GM12878 (cell line): ENCODE measurements at regions of chr1 and their contacts with region 1.

Region 1: GRCh38 chr1:207885129-207886032 is 25.5 kb downstream of the CD34 start:
- DNase-seq: no peak
- ATAC-seq: peak; percentile 91
- H3K4me3 ChIP-seq: no peak overlapping the region
- H3K27ac ChIP-seq: no peak overlapping the region
- H3K4me1 ChIP-seq: peaks cover 12% of the 10 kb centered on the region
- H3K27me3 ChIP-seq: no peaks in the 10 kb centered on the region
- CTCF ChIP-seq: peak; percentile 87 to 95 (median 95)
- EP300 ChIP-seq: no peak
- POLR2A ChIP-seq: no peak
- RAD21 ChIP-seq: peak; percentile 78

Region 2: GRCh38 chr1:207811920-207812720 is 73.3 kb before region 1 on chr1:
- CTCF ChIA-PET with region 1: interaction called, 12 read pairs
- POLR2A ChIA-PET with region 1: no interaction called
- RAD21 ChIA-PET with region 1: interaction called, 3 read pairs
- SMC1A ChIA-PET with region 1: interaction called, 5 read pairs
- in situ Hi-C with region 1: no loop called
- intact Hi-C with region 1: no loop called
- DNase-seq: no peak
- ATAC-seq: peak; percentile 53
- H3K4me3 ChIP-seq: no peak overlapping the region
- H3K27ac ChIP-seq: no peak overlapping the region
- H3K4me1 ChIP-seq: peaks cover 26% of the 10 kb centered on the region
- H3K27me3 ChIP-seq: no peaks in the 10 kb centered on the region
- CTCF ChIP-seq: peak; percentile 50 to 60 (median 56)
- EP300 ChIP-seq: no peak
- POLR2A ChIP-seq: peak; percentile 37; the same call in 1 of the 2 replicates
- RAD21 ChIP-seq: peak; percentile 55

Region 3: DNA sequence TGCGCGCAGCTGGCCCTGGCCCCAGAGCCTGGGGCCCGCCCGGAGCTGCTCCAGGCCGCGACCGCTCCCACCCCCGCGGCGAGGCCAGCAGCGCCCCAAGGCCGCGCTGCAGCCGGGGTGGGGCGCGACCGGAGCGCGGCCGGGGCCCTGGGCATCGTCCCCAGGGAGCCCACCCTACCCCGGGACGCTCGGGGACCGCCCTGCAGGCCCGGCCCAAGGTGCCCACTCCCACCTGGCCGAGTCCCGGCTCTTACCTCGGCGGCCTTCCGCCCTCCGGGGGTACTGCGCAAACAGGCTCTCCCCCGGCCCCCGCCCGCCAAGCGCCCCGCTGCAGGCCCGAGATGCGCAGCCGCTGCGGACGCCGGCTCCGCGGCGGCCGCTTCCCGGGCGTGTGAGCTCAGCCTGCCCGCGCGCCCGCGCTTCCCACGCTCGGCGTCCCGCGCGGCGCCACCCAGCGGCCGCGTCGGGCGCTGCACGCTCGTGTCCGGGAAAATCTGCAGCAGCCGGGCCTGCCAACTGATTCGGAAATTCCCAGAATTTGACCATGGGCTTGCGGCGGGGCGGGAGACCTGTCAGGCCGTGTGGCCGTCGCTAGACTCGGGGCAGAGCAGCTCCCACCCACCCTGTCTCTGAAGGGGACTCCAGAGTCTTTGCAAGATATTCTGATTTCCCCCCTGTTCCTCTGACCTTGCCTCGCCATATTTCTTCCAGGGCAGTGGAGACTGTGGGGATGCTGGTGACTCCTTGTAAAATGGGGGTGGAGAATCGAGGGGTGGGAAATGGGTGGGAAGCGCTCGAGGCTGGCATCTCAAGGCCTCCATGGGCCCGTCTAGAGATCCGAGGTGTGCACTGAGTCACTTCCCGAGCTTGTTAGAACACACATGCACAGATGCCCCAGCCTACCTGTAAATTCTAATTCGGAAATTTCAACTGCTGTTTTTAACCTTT is 16.3 kb before region 1 on chr1:
- CTCF ChIA-PET with region 1: interaction called, 244 read pairs
- POLR2A ChIA-PET with region 1: interaction called, 17 read pairs
- RAD21 ChIA-PET with region 1: interaction called, 70 read pairs
- SMC1A ChIA-PET with region 1: interaction called, 140 read pairs
- in situ Hi-C with region 1: no loop called
- intact Hi-C with region 1: no loop called
- DNase-seq: no peak
- ATAC-seq: peak; percentile 82
- H3K4me3 ChIP-seq: peak overlapping the region; percentile 97
- H3K27ac ChIP-seq: peak overlapping the region; percentile 77
- H3K4me1 ChIP-seq: peaks cover 55% of the 10 kb centered on the region
- H3K27me3 ChIP-seq: no peaks in the 10 kb centered on the region
- CTCF ChIP-seq: peak; percentile 70 to 83 (median 81)
- EP300 ChIP-seq: no peak; a peak in 1 of 4 replicates
- POLR2A ChIP-seq: peak; percentile 64; the same call in 1 of the 2 replicates
- RAD21 ChIP-seq: peak; percentile 62

Region 4: DNA sequence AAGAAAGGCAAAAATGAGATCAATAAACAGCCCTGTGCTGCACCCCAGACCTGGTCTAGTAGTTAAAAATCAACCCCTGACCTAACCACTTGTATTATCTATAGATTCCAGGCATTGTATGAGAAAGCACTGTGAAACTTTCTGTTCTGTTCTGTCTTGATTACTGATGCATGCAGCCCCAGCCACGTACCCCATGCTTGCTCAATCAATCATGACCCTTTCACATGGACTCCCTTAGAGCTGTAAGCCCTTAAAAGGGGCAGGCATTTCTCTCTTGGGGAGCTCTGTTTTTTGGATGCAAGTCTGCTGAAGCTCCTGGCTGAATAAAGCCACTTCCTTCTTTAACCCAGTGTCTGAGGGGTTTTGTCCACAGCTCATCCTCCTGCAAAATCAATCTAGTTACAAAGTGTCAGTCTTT is 49.8 kb after region 1 on chr1:
- CTCF ChIA-PET with region 1: interaction called, 19 read pairs
- POLR2A ChIA-PET with region 1: interaction called, 4 read pairs
- RAD21 ChIA-PET with region 1: interaction called, 8 read pairs
- SMC1A ChIA-PET with region 1: interaction called, 7 read pairs
- in situ Hi-C with region 1: no loop called
- intact Hi-C with region 1: no loop called
- DNase-seq: peak; percentile 87
- ATAC-seq: peak; percentile 99
- H3K4me3 ChIP-seq: no peak overlapping the region
- H3K27ac ChIP-seq: no peak overlapping the region
- H3K4me1 ChIP-seq: peaks cover 5% of the 10 kb centered on the region; the same call in 1 of the 2 replicates
- H3K27me3 ChIP-seq: no peaks in the 10 kb centered on the region; a peak in 1 of 4 replicates
- CTCF ChIP-seq: no peak
- EP300 ChIP-seq: peak; percentile 53 to 63; a peak in 1 of 4 replicates
- POLR2A ChIP-seq: no peak
- RAD21 ChIP-seq: no peak

Region 5: GRCh38 chr1:207952617-207953542 is 67.5 kb after region 1 on chr1:
- CTCF ChIA-PET with region 1: interaction called, 33 read pairs
- POLR2A ChIA-PET with region 1: no interaction called
- RAD21 ChIA-PET with region 1: interaction called, 5 read pairs
- SMC1A ChIA-PET with region 1: interaction called, 20 read pairs
- in situ Hi-C with region 1: no loop called
- intact Hi-C with region 1: no loop called
- DNase-seq: no peak
- ATAC-seq: peak; percentile 53
- H3K4me3 ChIP-seq: no peak overlapping the region
- H3K27ac ChIP-seq: no peak overlapping the region
- H3K4me1 ChIP-seq: no peaks in the 10 kb centered on the region
- H3K27me3 ChIP-seq: peaks cover 5 to 9% of the 10 kb centered on the region in 2 experiments
- CTCF ChIP-seq: no peak
- EP300 ChIP-seq: no peak
- POLR2A ChIP-seq: no peak
- RAD21 ChIP-seq: no peak

Region 6: GRCh38 chr1:207973898-207974568 is 88.7 kb after region 1 on chr1:
- CTCF ChIA-PET with region 1: interaction called, 52 read pairs
- POLR2A ChIA-PET with region 1: no interaction called
- RAD21 ChIA-PET with region 1: interaction called, 15 read pairs
- SMC1A ChIA-PET with region 1: interaction called, 9 read pairs
- in situ Hi-C with region 1: no loop called
- intact Hi-C with region 1: no loop called
- DNase-seq: no peak
- ATAC-seq: peak; percentile 65
- H3K4me3 ChIP-seq: no peak overlapping the region
- H3K27ac ChIP-seq: no peak overlapping the region
- H3K4me1 ChIP-seq: no peaks in the 10 kb centered on the region
- H3K27me3 ChIP-seq: peaks cover 0 to 4% of the 10 kb centered on the region in 2 experiments; a peak in 3 of 4 replicates
- CTCF ChIP-seq: no peak
- EP300 ChIP-seq: 0 out of 4 replicates have a peak, but pooled peaks of 1 of the 2 experiments have one; percentile 18
- POLR2A ChIP-seq: no peak
- RAD21 ChIP-seq: no peak

Region 7: DNA sequence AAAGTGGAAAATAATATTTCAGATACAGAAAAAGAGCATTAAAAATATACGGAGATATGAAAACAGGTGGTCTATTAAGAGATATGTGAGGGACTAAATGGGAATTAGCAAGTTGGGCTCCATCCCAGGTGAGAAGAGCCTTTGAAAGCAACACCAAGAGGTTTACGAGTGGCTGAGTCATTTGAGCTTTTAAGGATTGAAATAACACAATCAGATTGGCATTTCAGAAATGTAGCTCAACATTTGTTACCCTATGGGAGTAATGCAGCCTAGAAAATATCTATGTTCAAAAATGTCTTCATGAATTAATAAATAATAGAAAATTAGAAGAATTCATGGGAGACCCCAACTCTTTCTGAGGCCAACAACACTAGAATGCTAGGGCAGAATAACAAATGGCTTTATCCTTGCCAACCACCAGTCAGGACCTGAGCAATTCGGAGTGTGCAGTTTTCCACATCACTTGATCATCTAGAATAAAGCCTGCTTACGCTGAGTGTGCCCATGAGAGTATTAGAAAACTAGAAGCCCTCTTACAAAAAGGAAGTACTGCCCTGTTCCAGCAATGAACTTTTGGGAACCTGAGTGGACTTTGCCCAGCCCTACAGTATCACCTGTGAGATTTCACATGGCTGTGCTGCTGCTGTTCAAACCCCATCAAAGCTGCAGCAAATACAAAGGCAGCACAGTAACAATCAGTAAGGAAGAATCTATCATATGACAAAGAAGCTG is 1160.1 kb after region 1 on chr1:
- CTCF ChIA-PET with region 1: no interaction called
- POLR2A ChIA-PET with region 1: interaction called, 10 read pairs
- RAD21 ChIA-PET with region 1: no interaction called
- SMC1A ChIA-PET with region 1: no interaction called
- in situ Hi-C with region 1: no loop called
- intact Hi-C with region 1: no loop called
- DNase-seq: no peak
- ATAC-seq: no peak
- H3K4me3 ChIP-seq: no peak overlapping the region
- H3K27ac ChIP-seq: no peak overlapping the region
- H3K4me1 ChIP-seq: no peaks in the 10 kb centered on the region
- H3K27me3 ChIP-seq: no peaks in the 10 kb centered on the region; a peak in 1 of 4 replicates
- CTCF ChIP-seq: no peak
- EP300 ChIP-seq: no peak
- POLR2A ChIP-seq: no peak
- RAD21 ChIP-seq: no peak